ENCODE measurements at regions of chr15 and their contacts with region 1.

Region 1: GRCh38 chr15:33700695-33701304 is 267.5 kb upstream of the CHRM5 start:
- DNase-seq: peak; percentile 63 to 75 (median 70)
- ATAC-seq: peak; percentile 75
- H3K4me3 ChIP-seq: no peak overlapping the region
- H3K27ac ChIP-seq: no peak overlapping the region
- H3K4me1 ChIP-seq: no peaks in the 10 kb centered on the region
- H3K27me3 ChIP-seq: no peaks in the 10 kb centered on the region
- CTCF ChIP-seq: peak; percentile 64 to 91 (median 85)
- POLR2A ChIP-seq: no peak

Region 2: DNA sequence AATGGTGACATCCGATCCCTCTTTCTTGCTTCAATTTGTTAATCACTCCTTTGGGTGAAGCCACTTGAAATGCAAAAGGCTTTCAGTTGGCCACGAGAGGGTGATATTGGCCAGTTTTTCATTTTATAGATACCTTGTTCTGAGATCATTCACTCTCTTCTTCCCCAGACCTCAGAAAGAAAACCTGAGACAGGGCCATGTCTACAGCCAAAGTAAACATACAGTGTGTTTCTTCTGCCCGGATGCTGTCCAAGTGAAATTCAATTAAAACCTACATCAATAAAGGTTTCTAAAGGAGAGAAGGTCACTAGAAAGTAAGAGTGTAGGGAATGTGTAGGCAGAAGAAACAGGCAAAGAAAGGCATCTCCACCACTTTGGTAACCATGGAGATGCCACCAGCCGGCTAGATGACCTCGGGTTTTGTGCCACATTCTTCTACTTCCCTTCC is 466.8 kb before region 1 on chr15:
- intact Hi-C with region 1: loop called (anchors 10 kb)
- DNase-seq: peak in 1 of 4 donors; percentile 25
- ATAC-seq: no peak
- H3K4me3 ChIP-seq: no peak overlapping the region
- H3K27ac ChIP-seq: no peak overlapping the region
- H3K4me1 ChIP-seq: no peaks in the 10 kb centered on the region
- H3K27me3 ChIP-seq: no peaks in the 10 kb centered on the region
- CTCF ChIP-seq: peak in 6 of 7 experiments; percentile 18 to 42 (median 32)
- POLR2A ChIP-seq: no peak

Region 3: GRCh38 chr15:33279613-33280205 is 421.1 kb before region 1 on chr15:
- intact Hi-C with region 1: loop called (anchors 10 kb)
- DNase-seq: no peak
- ATAC-seq: no peak
- H3K4me3 ChIP-seq: no peak overlapping the region
- H3K27ac ChIP-seq: no peak overlapping the region
- H3K4me1 ChIP-seq: no peaks in the 10 kb centered on the region
- H3K27me3 ChIP-seq: no peaks in the 10 kb centered on the region
- CTCF ChIP-seq: no peak
- POLR2A ChIP-seq: no peak